Naive thymus-derived CD4-positive, alpha-beta T cell (primary cell): ENCODE measurements at regions of chr18 and their contacts with region 1.

Region 1: DNA sequence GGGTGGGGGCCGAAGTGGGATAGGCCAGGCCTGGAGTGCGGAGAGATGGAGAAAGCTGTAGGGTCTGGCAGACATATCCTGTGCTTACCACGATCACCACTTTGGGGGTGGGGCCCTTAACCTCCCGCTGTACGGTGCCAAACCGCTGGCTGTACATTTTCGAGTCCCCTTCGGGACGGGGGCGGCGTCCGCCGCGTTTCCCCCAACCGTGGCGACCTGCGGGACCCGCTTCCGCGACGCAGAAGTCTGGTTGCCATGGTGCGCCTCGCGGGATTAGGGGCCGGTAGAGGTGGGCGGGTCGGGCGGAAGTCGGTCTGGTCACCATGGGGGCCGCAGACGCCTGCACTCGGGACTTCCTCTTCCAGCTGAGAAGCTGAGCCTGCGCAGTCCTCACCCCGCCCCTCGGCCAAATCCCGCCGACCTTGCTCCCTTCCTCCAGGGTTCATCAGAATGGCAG is at the start of gene CFAP53:
- DNase-seq: peak; percentile 51 to 83 (median 69)
- ATAC-seq: peak; percentile 88
- H3K4me3 ChIP-seq: peak within 1 kb of the TSS; percentile 59
- H3K4me3 Mint-ChIP-seq: peak within 1 kb of the TSS; percentile 79 to 94 (median 90)
- H3K27ac ChIP-seq: peak within 1 kb of the TSS; percentile 50
- H3K27ac Mint-ChIP-seq: peak within 1 kb of the TSS; percentile 57 to 92 (median 81)
- H3K4me1 ChIP-seq: peaks cover 4 to 5% of the 10 kb centered on the region in 2 donors
- H3K4me1 Mint-ChIP-seq: peaks cover 9 to 29% (median 25%) of the 10 kb centered on the region in 7 donors
- H3K27me3 ChIP-seq: no peaks in the 10 kb centered on the region
- H3K27me3 Mint-ChIP-seq: peaks cover 0 to 17% (median 0%) of the 10 kb centered on the region in 5 donors
- total RNA-seq, gene CFAP53: 0.19 to 1.8 (median 0.64) TPM

Region 2: DNA sequence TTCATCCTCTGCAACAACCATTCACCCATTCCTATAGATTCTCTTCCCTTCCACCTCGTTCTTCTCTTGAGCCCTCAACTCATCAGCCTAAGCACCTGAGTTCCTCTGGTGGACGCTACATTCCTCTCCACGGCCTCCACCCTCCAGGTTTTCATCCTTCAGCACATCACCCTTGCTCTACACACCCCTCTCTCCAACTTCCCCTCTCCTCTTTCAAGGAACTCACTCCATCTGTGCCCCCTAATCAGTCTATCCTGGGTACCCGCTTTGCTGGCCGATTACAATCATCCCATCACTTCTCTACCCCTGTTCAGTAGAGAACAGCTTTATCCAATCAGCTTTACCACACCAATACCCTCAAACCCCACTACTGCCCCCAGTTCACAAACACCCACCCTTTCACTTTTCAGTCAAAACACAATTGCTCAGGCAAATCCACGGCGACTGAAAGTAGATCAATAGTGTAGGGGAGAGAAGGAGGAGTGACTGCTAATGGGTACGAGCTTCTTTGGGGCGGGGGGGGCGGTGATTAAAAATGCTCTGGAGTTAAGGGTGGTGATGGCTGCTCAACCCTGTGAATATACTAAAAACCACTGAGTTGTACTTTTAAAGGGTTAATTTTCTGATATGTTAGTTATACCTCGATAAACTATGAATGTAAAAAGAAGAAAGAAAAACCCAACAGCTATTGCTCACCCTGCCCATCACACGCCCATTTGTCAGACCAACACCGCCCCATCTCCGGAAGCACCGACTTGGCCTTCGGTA is 806.7 kb before region 1 on chr18:
- CTCF ChIA-PET with region 1: no interaction called
- POLR2A ChIA-PET with region 1: interaction called, 4 read pairs
- intact Hi-C with region 1: loop called in 1 of 2 experiments (anchors 5 kb)
- DNase-seq: peak in 3 of 9 donors; percentile 4 to 17 (median 5)
- ATAC-seq: peak; percentile 19
- H3K4me3 ChIP-seq: peak overlapping the region; percentile 86
- H3K4me3 Mint-ChIP-seq: peak overlapping the region; percentile 88 to 95 (median 94)
- H3K27ac ChIP-seq: peak overlapping the region; percentile 80
- H3K27ac Mint-ChIP-seq: peak overlapping the region; percentile 67 to 89 (median 83)
- H3K4me1 ChIP-seq: peaks cover 14 to 26% of the 10 kb centered on the region in 2 donors
- H3K4me1 Mint-ChIP-seq: peaks cover 34 to 62% (median 47%) of the 10 kb centered on the region in 7 donors
- H3K27me3 ChIP-seq: no peaks in the 10 kb centered on the region
- H3K27me3 Mint-ChIP-seq: peaks cover 0 to 6% (median 0%) of the 10 kb centered on the region in 5 donors

Region 3: DNA sequence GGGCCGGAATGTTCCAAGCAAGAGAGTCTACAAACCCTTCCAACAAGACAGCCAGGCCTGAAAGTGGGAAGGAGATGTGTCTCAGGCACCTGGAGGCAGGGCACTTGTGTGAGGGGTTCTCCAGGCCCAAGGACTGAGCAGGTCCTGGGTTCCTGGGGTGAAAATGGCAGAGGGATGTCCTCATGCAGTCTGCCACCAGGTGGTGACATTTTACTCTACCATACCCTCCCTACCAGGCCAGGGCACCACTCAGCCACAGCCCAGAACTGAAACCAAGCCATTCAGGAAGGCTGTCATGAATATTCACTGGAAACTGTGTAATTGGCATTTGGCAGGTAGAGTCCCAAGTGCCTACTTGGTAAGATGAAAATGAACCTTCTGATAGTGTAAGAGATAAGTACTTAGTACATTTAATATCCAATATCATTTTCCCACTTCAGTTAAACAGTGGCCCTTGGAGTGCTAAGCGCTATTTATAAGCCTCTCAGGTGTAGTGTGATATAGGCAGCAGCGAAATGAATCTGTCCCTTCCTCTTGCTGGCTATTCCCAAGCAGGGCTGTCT is 256.4 kb before region 1 on chr18:
- CTCF ChIA-PET with region 1: no interaction called
- POLR2A ChIA-PET with region 1: no interaction called
- intact Hi-C with region 1: loop called in 1 of 2 experiments (anchors 2 kb)
- DNase-seq: peak in 7 of 9 donors; percentile 2 to 42 (median 20)
- ATAC-seq: peak; percentile 73
- H3K4me3 ChIP-seq: no peak overlapping the region
- H3K4me3 Mint-ChIP-seq: no peak overlapping the region
- H3K27ac ChIP-seq: no peak overlapping the region
- H3K27ac Mint-ChIP-seq: no peak overlapping the region
- H3K4me1 ChIP-seq: no peaks in the 10 kb centered on the region
- H3K4me1 Mint-ChIP-seq: no peaks in the 10 kb centered on the region
- H3K27me3 ChIP-seq: no peaks in the 10 kb centered on the region
- H3K27me3 Mint-ChIP-seq: peaks cover 0 to 17% (median 0%) of the 10 kb centered on the region in 5 donors

Region 4: DNA sequence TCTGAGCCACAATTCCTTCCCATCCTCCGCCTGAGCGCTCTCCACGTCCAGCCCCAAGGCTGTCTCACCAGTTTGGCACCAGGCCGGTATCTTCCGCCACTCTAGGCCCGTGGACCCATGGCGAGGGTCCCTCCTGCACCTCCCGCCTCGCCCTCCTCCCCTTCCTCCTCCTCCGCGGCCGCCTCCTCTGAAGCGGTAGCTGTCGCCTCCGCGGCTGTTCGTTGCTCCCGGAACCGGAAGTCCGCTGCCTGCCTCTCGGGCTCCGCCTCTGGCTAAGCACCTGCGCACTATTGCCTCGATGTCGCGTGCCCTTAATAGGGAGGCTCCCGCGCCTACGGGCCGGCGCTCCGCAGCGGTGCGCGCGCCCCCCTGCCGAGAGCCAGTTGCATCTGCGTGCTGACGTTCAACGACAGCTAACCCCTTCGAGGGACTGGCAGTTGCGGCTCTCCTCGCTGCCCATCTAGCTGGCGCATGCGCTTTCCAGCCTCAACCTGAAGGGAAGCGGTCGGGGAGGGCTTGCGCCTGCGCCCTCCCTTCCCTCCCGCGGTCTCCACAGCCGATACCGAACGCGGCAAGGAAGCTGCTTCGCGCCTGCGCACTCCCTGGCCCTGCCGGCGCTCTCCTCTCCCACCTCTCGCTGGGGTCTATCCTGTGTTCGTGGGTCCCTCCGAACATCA is 15.2 kb after region 1 on chr18 and contains the start of gene MBD1:
- CTCF ChIA-PET with region 1: interaction called, 8 read pairs
- POLR2A ChIA-PET with region 1: interaction called, 29 read pairs
- intact Hi-C with region 1: loop called (anchors 1 kb)
- DNase-seq: peak; percentile 90 to 99 (median 97)
- ATAC-seq: peak; percentile 94
- H3K4me3 ChIP-seq: peak within 1 kb of the TSS; percentile 94
- H3K4me3 Mint-ChIP-seq: peak within 1 kb of the TSS; percentile 90 to 99 (median 97)
- H3K27ac ChIP-seq: peak within 1 kb of the TSS; percentile 88
- H3K27ac Mint-ChIP-seq: peak within 1 kb of the TSS; percentile 93 to 99 (median 97)
- H3K4me1 ChIP-seq: peaks cover 21 to 33% of the 10 kb centered on the region in 2 donors
- H3K4me1 Mint-ChIP-seq: peaks cover 24 to 53% (median 45%) of the 10 kb centered on the region in 7 donors
- H3K27me3 ChIP-seq: no peaks in the 10 kb centered on the region
- H3K27me3 Mint-ChIP-seq: peaks cover 0 to 2% (median 0%) of the 10 kb centered on the region in 5 donors
- total RNA-seq, gene MBD1: 97.5 to 158 (median 118) TPM

Region 5: GRCh38 chr18:50374753-50375391 is 108.6 kb after region 1 on chr18 and contains the start of gene SKA1:
- CTCF ChIA-PET with region 1: no interaction called
- POLR2A ChIA-PET with region 1: no interaction called
- intact Hi-C with region 1: loop called (anchors 1 kb)
- DNase-seq: peak; percentile 85 to 92 (median 89)
- ATAC-seq: peak; percentile 99
- H3K4me3 ChIP-seq: peak within 1 kb of the TSS; percentile 62
- H3K4me3 Mint-ChIP-seq: peak within 1 kb of the TSS; percentile 75 to 90 (median 80)
- H3K27ac ChIP-seq: peak within 1 kb of the TSS; percentile 71
- H3K27ac Mint-ChIP-seq: peak within 1 kb of the TSS; percentile 72 to 91 (median 87)
- H3K4me1 ChIP-seq: peaks cover 0 to 13% of the 10 kb centered on the region in 2 donors
- H3K4me1 Mint-ChIP-seq: peaks cover 0 to 34% (median 14%) of the 10 kb centered on the region in 7 donors
- H3K27me3 ChIP-seq: peaks cover 0 to 6% of the 10 kb centered on the region in 2 donors
- H3K27me3 Mint-ChIP-seq: peaks cover 0 to 8% (median 7%) of the 10 kb centered on the region in 5 donors
- total RNA-seq, gene SKA1: 0.27 to 24.8 (median 0.43) TPM